ENCODE measurements at regions of chr9 and their contacts with region 1.

Region 1: DNA sequence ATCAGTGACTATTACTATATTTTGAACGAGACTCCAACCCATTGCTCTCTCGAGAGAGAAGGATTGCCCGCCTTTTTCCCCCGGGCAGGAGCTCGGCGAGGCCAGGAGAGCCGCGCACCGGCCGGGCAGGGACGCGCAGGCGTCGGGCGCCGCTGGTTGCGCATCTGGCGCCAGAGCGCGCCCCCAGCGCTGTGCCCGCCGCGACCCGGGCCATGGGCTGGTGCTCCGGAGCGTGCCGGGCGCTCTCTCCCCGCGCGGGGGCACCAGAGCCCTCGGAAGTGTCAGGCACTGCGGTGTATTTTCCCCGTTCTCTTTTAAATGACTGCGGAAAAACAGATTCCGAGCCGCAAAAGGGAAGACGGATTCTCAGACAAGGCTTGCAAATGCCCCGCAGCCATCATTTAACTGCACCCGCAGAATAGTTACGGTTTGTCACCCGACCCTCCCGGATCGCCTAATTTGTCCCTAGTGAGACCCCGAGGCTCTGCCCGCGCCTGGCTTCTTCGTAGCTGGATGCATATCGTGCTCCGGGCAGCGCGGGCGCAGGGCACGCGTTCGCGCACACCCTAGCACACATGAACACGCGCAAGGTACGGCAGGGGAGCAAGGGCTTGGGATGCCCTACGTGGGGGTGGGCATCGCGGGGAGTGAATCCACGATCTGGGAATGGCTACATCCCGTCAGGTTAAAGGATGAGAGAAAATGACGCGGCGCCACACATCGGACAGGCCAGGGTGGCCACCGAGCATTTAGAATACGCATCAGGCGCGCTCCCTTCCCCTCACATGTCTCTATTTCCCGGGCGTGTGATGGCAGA is 1.1 kb upstream of the NTRK2 start:
- DNase-seq: peak in 1 of 2 donors; percentile 87
- H3K4me3 ChIP-seq: peak overlapping the region; percentile 43 to 77
- H3K27ac ChIP-seq: peak overlapping the region in 1 of 2 donors; percentile 13
- H3K4me1 ChIP-seq: no peaks in the 10 kb centered on the region
- H3K27me3 ChIP-seq: no peaks in the 10 kb centered on the region
- CTCF ChIP-seq: peak; percentile 37 to 58 (median 48)

Region 2: GRCh38 chr9:84851935-84852585 is 183.7 kb after region 1 on chr9:
- intact Hi-C with region 1: loop called (anchors 5 kb)
- DNase-seq: peak in 1 of 2 donors; percentile 84
- H3K4me3 ChIP-seq: no peak overlapping the region
- H3K27ac ChIP-seq: no peak overlapping the region
- H3K4me1 ChIP-seq: peaks cover 9 to 23% of the 10 kb centered on the region in 2 donors
- H3K27me3 ChIP-seq: no peaks in the 10 kb centered on the region
- CTCF ChIP-seq: no peak

Region 3: GRCh38 chr9:84953797-84954705 is 285.6 kb after region 1 on chr9:
- intact Hi-C with region 1: loop called (anchors 2 kb)
- DNase-seq: peak in 1 of 2 donors; percentile 83
- H3K4me3 ChIP-seq: no peak overlapping the region
- H3K27ac ChIP-seq: no peak overlapping the region
- H3K4me1 ChIP-seq: no peaks in the 10 kb centered on the region
- H3K27me3 ChIP-seq: no peaks in the 10 kb centered on the region
- CTCF ChIP-seq: peak; percentile 62 to 95 (median 91)

Region 4: DNA sequence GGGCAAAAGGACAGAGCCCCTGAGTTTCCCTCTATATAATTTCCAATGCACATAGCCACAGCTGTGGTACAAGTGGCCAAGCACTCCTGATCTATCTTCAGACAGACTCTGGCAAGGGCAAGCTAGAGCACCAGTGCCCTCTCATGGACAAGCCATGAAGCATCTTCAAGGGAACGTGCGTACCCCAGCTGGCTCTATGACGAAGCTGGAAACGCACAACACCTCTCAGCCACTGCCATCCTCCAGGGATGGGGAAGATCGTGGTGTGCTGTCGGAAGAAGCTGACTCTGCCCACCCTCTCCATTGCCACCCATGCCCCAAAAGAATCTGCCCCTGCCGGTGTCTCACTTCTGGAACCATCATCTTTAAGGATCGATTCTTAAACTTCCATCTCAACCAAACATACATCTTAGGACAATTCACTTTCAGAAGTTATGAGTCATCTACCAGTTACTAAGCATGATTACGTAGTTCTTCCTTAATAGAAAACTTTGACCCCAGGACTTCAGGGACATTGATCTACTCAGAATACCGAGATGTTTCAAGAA is 590.5 kb after region 1 on chr9:
- intact Hi-C with region 1: loop called (anchors 10 kb)
- DNase-seq: no peak
- H3K4me3 ChIP-seq: no peak overlapping the region
- H3K27ac ChIP-seq: no peak overlapping the region
- H3K4me1 ChIP-seq: no peaks in the 10 kb centered on the region
- H3K27me3 ChIP-seq: no peaks in the 10 kb centered on the region
- CTCF ChIP-seq: peak in 2 of 3 experiments; percentile 54 to 66

Measured in ascending aorta (tissue), 2 donors.